Sigmoid colon (tissue), 7 donors: ENCODE measurements at regions of chr11 and their contacts with region 1.

Region 1: DNA sequence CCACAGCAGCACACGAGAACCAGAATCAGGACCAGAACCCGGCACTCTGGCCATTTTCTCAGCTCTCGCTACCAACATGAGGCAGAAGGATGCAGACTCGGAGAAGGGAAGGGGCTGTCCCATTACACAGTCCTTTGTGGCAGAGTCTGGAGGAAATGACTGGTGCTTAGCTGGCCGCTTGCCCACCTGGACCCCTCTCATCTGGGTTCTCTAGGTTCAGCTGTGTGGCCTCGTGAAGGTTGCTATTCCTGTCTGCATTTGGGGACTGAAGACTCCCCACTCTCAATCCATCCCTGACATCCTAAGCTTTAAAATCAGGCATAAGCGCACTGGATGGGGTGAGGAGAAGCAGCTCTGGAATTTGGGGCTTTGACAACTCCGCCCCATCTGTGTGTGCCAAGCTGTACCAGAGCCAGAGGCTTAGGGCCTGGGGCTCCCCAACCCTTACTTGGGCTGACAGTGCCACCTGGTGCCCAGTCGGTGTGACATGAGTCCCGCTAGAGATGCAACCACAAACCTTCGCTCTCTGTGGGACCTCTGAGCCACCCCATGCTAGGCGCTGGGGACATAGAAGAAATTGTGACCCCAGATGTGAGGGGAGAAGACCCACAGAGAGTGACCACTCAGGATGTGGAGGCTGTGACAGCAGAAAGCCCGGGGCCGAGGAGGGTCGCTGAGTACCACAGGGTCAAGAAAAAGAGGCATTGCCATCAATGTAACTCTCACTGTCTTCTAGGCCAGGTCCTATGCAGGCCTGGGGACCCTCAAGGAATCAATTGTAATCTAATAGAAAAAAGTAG is 35.9 kb upstream of the FCHSD2 start:
- DNase-seq: peak; percentile 91
- H3K4me3 ChIP-seq: no peak overlapping the region
- H3K27ac ChIP-seq: peak overlapping the region; percentile 51 to 69 (median 61)
- H3K4me1 ChIP-seq: peaks cover 0 to 15% (median 13%) of the 10 kb centered on the region in 4 donors
- H3K27me3 ChIP-seq: no peaks in the 10 kb centered on the region
- CTCF ChIP-seq: peak; percentile 82 to 94 (median 84)
- EP300 ChIP-seq: no peak
- POLR2A ChIP-seq: no peak

Region 2: GRCh38 chr11:72722050-72722748 is 455.8 kb before region 1 on chr11:
- intact Hi-C with region 1: loop called (anchors 2 kb)
- DNase-seq: peak; percentile 93
- H3K4me3 ChIP-seq: peak overlapping the region; percentile 56 to 82 (median 62)
- H3K27ac ChIP-seq: peak overlapping the region; percentile 83 to 89 (median 88)
- H3K4me1 ChIP-seq: peaks cover 0 to 67% (median 53%) of the 10 kb centered on the region in 4 donors
- H3K27me3 ChIP-seq: no peaks in the 10 kb centered on the region
- CTCF ChIP-seq: no peak
- EP300 ChIP-seq: no peak
- POLR2A ChIP-seq: no peak

Region 3: DNA sequence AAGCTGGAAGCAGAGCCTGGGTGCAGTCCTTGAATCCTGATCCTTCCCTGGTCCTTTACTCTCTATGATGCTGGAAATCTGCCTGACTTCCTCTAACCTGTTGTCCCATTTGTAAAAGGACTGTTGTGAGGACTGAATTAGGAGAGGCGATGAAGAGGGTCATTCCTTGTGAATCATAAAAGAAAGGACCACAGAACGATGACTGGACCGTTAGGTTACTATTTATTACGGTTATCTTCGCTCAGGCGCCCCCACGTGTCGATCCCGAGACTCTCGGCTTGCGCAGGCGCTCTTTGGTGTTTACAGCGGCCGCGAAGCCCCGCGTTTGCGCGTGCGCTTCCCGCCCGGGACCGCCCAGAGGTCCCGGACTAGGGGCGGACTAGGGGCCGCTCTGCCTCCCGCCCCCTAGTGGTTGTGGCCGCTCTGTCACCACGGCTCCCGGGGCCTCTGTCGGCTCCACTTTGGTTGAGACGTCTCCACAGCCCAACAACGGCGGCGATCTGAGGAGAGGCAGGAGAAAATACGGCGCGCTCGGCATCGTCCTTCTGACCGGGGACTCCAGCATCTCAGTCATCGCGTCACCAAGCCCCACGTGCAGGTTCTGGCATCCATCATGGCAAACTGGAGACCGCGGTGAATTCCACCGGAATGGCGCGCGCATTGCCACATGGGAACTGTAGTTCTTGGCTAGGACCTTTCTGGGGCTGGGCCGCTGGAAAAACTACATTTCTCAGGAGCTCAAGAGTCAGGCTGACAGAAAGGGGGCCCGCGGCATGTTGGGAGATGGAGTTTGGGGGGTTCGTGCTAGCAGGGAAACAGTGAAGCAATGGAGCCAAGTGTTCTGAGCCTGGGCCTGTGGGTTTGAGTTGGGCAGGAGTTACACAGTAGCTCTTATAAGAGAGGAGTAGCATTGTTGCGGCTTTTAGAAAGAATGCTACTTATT is 384.3 kb before region 1 on chr11 and contains the start of gene STARD10:
- intact Hi-C with region 1: no loop called
- DNase-seq: peak; percentile 97
- H3K4me3 ChIP-seq: peak within 1 kb of the TSS; percentile 44 to 68 (median 64)
- H3K27ac ChIP-seq: peak within 1 kb of the TSS; percentile 88 to 95 (median 90)
- H3K4me1 ChIP-seq: peaks cover 0 to 23% (median 19%) of the 10 kb centered on the region in 4 donors
- H3K27me3 ChIP-seq: no peaks in the 10 kb centered on the region
- CTCF ChIP-seq: peak; percentile 91 to 100 (median 100)
- EP300 ChIP-seq: peak in 1 of 4 donors; percentile 82
- POLR2A ChIP-seq: peak in 1 of 2 donors; percentile 7
- total RNA-seq, gene STARD10: 29.9 to 60.1 (median 43.9) TPM

Region 4: DNA sequence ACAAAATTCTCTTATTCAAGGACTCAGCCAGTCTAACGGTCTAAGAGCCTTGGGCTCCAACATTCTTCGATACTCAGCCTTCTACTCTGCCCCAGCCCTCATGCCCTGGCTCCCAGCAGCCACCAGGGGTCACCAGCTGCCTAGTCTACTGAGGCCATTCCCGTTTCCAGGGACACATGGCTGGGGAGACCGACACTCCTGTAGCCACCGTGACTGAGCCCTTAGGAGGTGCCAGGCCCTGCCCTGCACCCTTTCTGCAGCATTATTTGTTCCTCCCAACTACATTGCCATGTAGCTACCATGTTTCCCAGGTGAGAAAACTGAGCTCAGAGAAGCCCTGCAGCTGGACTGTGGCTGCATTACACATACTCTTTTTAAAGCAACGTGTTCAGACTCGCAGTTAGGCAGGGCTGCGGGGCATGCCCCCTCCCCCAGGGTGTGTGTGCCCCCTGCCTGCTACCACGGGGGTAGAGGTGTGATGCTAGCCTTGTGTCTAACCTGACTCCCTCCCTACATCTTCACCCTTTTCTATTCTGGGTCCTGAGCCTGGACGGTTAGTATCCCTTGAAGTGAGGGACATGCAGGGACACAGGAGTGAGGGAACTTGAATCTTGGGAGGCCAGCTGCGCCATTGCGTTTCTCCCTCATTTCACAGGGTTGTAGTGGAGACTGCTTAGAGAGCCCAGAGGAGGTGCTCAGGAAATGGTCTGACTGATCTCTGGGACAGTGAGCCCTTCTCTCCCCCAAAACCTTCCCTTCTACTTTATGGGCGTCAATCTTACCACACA is 346.3 kb before region 1 on chr11:
- intact Hi-C with region 1: loop called (anchors 1 kb)
- DNase-seq: peak; percentile 93
- H3K4me3 ChIP-seq: no peak overlapping the region
- H3K27ac ChIP-seq: peak overlapping the region in 3 of 4 donors; percentile 8 to 71 (median 15)
- H3K4me1 ChIP-seq: peaks cover 0 to 52% (median 24%) of the 10 kb centered on the region in 4 donors
- H3K27me3 ChIP-seq: no peaks in the 10 kb centered on the region
- CTCF ChIP-seq: peak; percentile 91 to 96 (median 95)
- EP300 ChIP-seq: no peak
- POLR2A ChIP-seq: no peak

Region 5: GRCh38 chr11:72924568-72925190 is 253.3 kb before region 1 on chr11:
- intact Hi-C with region 1: loop called (anchors 5 kb)
- DNase-seq: no peak
- H3K4me3 ChIP-seq: no peak overlapping the region
- H3K27ac ChIP-seq: no peak overlapping the region
- H3K4me1 ChIP-seq: peaks cover 0 to 6% (median 2%) of the 10 kb centered on the region in 4 donors
- H3K27me3 ChIP-seq: no peaks in the 10 kb centered on the region
- CTCF ChIP-seq: peak in 3 of 4 experiments; percentile 28 to 45 (median 45)
- EP300 ChIP-seq: no peak
- POLR2A ChIP-seq: no peak